AG04449 (cell line): ENCODE measurements at regions of chr11 and their contacts with region 1.

Region 1: DNA sequence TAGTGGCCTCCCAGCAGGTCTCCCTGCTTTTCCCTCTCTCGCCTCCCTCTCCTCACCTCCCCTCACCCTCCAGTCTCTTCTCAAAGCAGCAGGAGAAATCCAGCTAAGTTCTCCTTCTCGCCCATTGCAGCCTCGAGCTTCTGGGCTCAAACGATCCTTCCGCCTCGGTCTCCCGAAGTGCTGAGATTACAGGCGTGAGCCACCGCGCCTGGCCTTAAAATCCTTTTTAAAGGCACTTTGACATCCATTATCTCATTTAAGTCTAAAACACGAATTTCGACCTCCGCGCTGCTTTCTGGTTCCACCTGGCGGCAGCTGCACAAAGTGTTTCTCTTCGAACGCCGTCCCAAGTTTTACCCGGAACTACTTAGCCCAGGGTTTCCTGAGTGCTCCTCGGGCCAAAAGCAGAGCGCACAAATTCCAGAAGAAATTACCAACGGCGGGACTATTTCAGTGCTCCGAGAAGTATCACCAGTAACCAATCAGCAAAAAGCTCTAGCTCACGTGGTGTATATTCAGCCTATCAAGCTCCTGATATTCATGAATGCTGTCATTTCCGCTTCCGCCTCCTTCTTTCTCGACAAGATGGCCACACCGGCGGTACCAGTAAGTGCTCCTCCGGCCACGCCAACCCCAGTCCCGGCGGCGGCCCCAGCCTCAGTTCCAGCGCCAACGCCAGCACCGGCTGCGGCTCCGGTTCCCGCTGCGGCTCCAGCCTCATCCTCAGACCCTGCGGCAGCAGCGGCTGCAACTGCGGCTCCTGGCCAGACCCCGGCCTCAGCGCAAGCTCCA is at the start of gene EIF3F:
- DNase-seq: peak; percentile 99
- H3K4me3 ChIP-seq: peak within 1 kb of the TSS; percentile 77
- CTCF ChIP-seq: peak; percentile 75

Region 2: DNA sequence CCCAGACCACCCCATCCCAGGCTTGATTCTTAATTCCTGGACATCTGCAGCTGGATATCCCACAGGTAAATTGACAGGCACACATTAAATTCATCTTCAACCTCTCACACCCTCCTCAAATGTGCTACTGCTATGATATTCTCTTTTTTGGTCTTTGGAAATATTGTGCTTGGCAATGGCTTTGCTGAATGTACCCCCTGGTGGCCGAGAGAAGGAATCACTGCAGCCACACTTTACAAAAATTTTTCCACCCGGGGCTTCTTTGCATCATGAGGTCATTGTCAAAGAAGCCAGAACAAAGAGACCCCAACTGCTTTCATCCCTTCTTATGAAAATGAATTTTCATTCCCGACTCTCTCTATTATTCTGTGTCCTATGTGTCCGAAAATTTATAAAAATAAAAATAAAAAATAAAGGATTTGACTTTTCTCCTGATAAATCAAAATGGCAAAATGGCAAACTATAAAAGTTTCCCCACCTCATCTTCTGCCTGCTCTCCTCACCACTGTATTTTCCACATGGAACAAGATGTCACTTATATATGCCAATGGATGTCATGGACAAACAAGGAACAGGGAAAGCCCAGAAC is 298.6 kb before region 1 on chr11:
- CTCF ChIA-PET with region 1: interaction called, 13 read pairs
- POLR2A ChIA-PET with region 1: no interaction called
- DNase-seq: no peak
- H3K4me3 ChIP-seq: no peak overlapping the region
- CTCF ChIP-seq: peak; percentile 69

Region 3: GRCh38 chr11:7851391-7851790 is 135.6 kb before region 1 on chr11:
- CTCF ChIA-PET with region 1: interaction called, 10 read pairs
- POLR2A ChIA-PET with region 1: no interaction called
- DNase-seq: no peak
- H3K4me3 ChIP-seq: no peak overlapping the region
- CTCF ChIP-seq: no peak

Region 4: GRCh38 chr11:7899418-7900177 is 87.4 kb before region 1 on chr11:
- CTCF ChIA-PET with region 1: interaction called, 337 read pairs
- POLR2A ChIA-PET with region 1: interaction called, 13 read pairs
- DNase-seq: no peak
- H3K4me3 ChIP-seq: no peak overlapping the region
- CTCF ChIP-seq: no peak

Region 5: GRCh38 chr11:7949934-7950333 is 37.0 kb before region 1 on chr11:
- CTCF ChIA-PET with region 1: interaction called, 10 read pairs
- POLR2A ChIA-PET with region 1: no interaction called
- DNase-seq: no peak
- H3K4me3 ChIP-seq: no peak overlapping the region
- CTCF ChIP-seq: no peak

Region 6: DNA sequence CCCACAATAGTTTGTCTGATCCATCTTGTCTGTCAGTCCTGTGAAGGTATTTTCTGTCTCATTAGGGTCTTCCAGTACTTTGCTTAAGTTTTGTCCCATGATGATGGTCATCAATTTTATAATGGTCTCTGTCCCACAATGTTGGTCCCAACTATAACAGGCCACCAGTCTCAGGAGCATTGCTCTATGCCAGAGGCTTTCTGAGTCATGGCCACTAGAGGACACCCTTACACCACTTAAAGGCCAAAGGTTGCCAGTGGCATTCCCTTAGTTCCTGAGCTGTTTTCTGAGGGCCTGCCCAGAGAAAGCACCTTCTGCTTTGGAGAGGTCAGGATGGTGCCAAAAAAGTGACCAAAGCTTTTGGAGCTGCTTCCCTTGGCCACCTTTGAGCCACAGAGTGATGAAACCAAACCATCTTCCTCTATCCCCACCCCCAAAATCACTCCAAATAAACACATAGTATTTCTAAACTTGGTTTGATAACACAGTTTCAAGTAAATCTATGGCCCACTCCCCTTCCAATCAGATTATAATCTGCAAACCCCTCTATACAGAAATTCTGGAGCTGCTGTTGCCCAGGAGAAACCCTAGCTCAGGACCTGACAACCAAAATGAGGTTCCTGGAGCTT is 19.5 kb after region 1 on chr11:
- CTCF ChIA-PET with region 1: interaction called, 16 read pairs
- POLR2A ChIA-PET with region 1: no interaction called
- DNase-seq: peak; percentile 21
- H3K4me3 ChIP-seq: no peak overlapping the region
- CTCF ChIP-seq: peak; percentile 89